IMR-90 (cell line): ENCODE measurements at regions of chr7 and their contacts with region 1.

Region 1: GRCh38 chr7:116647290-116647689 is 24.7 kb upstream of the MET start:
- DNase-seq: no peak
- ATAC-seq: no peak
- H3K4me3 ChIP-seq: no peak overlapping the region
- H3K27ac ChIP-seq: no peak overlapping the region
- H3K4me1 ChIP-seq: no peaks in the 10 kb centered on the region
- H3K27me3 ChIP-seq: peaks cover 4% of the 10 kb centered on the region
- CTCF ChIP-seq: no peak
- POLR2A ChIP-seq: no peak
- RAD21 ChIP-seq: no peak

Region 2: GRCh38 chr7:116607299-116607698 is 40.0 kb before region 1 on chr7:
- CTCF ChIA-PET with region 1: no interaction called
- POLR2A ChIA-PET with region 1: no interaction called
- dilution Hi-C with region 1: no loop called
- in situ Hi-C with region 1: no loop called
- intact Hi-C with region 1: loop called (anchors 5 kb)
- DNase-seq: no peak
- ATAC-seq: no peak
- H3K4me3 ChIP-seq: no peak overlapping the region
- H3K27ac ChIP-seq: no peak overlapping the region
- H3K4me1 ChIP-seq: no peaks in the 10 kb centered on the region
- H3K27me3 ChIP-seq: no peaks in the 10 kb centered on the region
- CTCF ChIP-seq: no peak
- POLR2A ChIP-seq: no peak
- RAD21 ChIP-seq: no peak